ENCODE measurements at regions of chr9 and their contacts with region 1.

Region 1: DNA sequence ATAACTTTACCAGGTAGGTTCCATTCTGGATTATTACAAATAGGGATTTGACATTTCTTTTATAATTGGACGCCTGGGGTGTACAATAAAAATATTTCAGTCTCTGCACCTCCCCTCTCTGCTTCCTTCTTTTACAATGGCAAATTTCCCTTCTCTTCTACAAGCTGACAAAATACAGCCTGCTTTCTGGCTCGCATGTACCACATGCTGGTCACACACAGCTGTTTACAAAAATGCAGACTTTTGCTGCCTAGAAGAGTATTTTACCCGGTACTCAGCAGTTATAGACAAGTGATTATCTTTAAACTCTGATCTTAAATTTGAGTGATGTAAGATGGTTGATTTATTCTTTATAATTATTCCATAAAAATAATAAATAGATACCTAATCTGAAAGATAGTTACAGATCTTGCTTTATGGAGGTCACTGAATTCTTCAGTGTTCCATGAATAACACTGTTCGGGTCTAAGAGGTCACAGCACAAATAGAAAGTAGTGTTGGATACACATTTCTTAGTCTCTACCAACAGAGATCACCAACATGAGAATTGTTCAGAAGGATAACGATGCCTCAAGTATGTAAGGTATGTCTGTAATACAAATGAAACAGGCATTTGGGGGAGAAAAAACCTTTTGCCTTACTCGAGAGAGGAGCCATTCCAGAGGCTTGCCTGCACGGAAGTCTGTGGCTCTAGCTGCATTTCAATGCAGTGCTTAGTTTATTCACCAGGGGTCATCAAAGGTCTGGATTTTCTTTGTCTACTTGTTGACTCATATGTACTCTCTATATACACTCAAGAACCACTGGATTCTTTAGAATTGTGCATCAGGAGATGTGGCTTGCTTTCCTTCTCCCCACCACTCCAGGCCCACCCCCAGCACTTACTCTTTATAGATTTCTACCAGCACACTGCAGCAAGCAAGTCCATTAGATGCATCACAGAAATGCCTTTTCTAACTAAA is 206.6 kb upstream of the RFX3 start:
- DNase-seq: peak; percentile 91
- ATAC-seq: peak; percentile 89
- H3K4me3 ChIP-seq: no peak overlapping the region
- H3K27ac ChIP-seq: peak overlapping the region; percentile 90
- H3K4me1 ChIP-seq: peaks cover 29% of the 10 kb centered on the region
- H3K27me3 ChIP-seq: no peaks in the 10 kb centered on the region
- CTCF ChIP-seq: peak; percentile 76

Region 2: DNA sequence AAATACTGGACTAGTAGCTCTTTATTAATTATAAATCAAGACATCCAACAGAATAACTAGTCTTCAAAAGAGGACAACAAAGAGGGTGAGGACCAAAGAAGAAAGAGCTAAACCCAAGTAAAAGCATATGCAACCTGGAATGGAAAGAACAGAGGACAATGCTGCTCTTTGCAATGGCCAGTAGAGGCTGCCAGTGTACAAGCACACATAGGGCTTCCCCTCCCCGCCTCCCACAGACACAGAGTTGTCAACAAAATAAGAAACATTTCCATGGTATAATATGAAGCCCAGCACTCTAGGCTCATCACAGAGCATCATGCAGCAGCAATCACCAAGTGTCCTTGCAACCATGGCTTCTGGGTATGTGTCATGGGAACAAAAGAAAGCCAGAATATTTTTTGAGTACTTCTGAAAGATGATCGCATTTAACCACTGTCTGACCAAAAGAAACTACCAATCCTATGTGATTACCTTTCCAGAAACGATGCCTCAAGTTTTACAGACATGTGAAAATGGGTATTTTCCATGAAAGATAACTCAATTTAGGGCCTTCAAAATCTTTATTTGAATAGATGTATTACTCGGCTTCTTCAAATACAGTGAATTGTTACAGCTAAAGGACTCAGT is 264.7 kb before region 1 on chr9:
- CTCF ChIA-PET with region 1: no interaction called
- POLR2A ChIA-PET with region 1: no interaction called
- intact Hi-C with region 1: loop called (anchors 1 kb)
- DNase-seq: peak; percentile 55
- ATAC-seq: peak; percentile 94
- H3K4me3 ChIP-seq: no peak overlapping the region
- H3K27ac ChIP-seq: no peak overlapping the region
- H3K4me1 ChIP-seq: 0 out of 2 replicates have a peak, but pooled peaks cover 3% of the 10 kb centered on the region
- H3K27me3 ChIP-seq: no peaks in the 10 kb centered on the region
- CTCF ChIP-seq: peak; percentile 89

Region 3: GRCh38 chr9:3875364-3876132 is 143.2 kb after region 1 on chr9:
- CTCF ChIA-PET with region 1: no interaction called
- POLR2A ChIA-PET with region 1: no interaction called
- intact Hi-C with region 1: loop called (anchors 2 kb)
- DNase-seq: peak; percentile 97
- ATAC-seq: peak; percentile 76
- H3K4me3 ChIP-seq: peak overlapping the region; percentile 10; the same call in 1 of the 2 replicates
- H3K27ac ChIP-seq: peak overlapping the region; percentile 99
- H3K4me1 ChIP-seq: peaks cover 35% of the 10 kb centered on the region
- H3K27me3 ChIP-seq: no peaks in the 10 kb centered on the region
- CTCF ChIP-seq: no peak

Region 4: DNA sequence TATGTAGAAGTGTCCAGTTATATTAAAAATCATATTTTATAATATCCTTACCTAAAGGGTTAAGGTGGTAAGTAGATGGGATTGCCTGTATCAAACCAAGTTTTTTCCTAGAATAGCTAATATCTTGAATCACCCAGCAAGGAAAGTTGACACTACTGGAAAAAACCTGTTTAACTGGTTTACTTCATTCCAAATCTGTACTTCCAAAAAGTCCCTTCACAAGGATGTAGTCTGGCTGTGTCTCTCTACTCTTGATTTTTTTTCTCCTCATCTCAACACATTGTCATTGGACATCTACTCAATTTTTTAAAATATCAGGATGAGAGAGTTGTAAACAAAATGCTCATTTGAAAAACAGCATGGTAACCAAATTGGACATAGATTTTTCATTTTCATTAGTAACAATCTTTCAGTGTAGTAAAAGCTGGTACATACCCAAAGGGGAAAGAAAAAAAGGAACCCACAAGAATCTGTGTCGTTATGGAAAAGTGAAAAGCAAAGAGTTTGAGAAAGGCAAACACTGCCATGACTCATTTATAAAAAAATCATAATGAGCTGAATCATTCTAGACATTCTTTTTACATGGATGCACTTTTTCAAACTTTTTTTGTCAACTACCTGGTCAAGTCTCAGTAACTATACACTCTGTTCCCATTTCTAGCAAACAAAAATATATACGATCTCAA is 394.0 kb after region 1 on chr9:
- CTCF ChIA-PET with region 1: no interaction called
- POLR2A ChIA-PET with region 1: no interaction called
- intact Hi-C with region 1: loop called (anchors 5 kb)
- DNase-seq: peak; percentile 79
- ATAC-seq: peak; percentile 84
- H3K4me3 ChIP-seq: peak overlapping the region; percentile 28
- H3K27ac ChIP-seq: peak overlapping the region; percentile 99
- H3K4me1 ChIP-seq: peaks cover 27% of the 10 kb centered on the region
- H3K27me3 ChIP-seq: no peaks in the 10 kb centered on the region
- CTCF ChIP-seq: no peak

Region 5: GRCh38 chr9:4339357-4339756 is 607.0 kb after region 1 on chr9:
- CTCF ChIA-PET with region 1: no interaction called
- POLR2A ChIA-PET with region 1: no interaction called
- intact Hi-C with region 1: loop called (anchors 1 kb)
- DNase-seq: peak; percentile 87
- ATAC-seq: peak; percentile 76
- H3K4me3 ChIP-seq: no peak overlapping the region
- H3K27ac ChIP-seq: no peak overlapping the region
- H3K4me1 ChIP-seq: no peaks in the 10 kb centered on the region
- H3K27me3 ChIP-seq: no peaks in the 10 kb centered on the region
- CTCF ChIP-seq: peak; percentile 89